ENCODE measurements at regions of chr22 and their contacts with region 1.

Region 1: DNA sequence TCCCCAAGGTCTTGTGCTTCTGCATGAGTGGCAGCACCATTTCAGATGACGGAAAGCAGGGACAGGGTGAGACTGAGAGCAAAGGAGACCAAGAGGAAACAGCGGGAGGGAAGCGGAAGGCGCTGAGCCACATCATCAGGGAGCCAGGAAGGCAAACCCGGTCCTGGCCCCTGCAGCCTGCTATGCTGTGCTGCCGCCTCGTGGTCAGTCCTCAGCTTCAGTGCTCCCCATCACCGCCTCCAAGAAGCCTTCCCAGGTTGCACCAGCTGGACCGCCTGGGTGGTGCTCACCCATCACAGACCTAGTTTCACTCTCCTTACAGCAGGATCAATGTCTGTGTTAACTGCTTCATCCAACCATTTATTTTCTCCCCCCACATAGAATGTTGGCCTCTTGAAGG is 73.0 kb upstream of the PHF21B start:
- DNase-seq: peak; percentile 45
- H3K4me3 Mint-ChIP-seq: no peak overlapping the region
- H3K27ac Mint-ChIP-seq: no peak overlapping the region
- H3K4me1 Mint-ChIP-seq: peaks cover 14% of the 10 kb centered on the region
- H3K27me3 Mint-ChIP-seq: peaks cover 37% of the 10 kb centered on the region

Region 2: DNA sequence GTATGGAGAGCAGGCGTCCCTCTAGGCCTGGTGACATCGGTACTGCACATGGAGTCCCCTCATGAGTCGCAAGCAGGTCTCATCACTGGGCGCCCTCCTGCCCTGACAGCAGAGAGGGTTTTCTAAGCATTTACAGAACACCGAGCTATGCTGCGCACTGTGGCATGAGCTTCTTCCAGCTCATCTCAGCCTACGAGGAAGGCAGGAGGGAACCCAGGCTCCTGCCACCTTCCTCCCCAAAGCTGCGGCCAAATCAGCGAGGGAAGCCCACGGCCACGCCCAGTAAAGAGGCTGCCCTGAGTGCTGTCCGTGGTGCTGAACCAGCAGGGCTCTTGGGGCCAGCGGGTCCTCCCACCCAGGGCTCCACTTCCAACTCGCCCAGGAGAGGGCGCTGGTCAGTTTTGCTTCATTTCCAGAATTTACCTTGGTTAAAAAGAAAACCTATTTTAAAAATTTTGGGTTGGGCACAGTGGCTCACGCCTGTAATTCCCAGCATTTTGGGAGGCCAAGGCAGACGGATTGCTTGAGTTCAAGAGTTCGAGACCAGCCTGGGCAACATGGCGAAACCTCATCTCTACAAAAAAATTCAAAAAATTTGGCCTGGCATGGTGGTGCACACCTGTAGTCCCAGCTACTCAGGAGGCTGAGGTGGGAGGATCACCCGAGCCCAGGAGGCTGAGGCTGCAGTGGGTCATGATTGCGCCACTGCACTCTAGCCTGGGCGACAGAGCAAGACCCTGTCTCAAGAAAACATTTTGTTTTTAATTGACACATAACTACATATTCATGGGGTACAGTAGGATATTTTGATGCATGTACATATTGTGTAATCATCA is 107.2 kb before region 1 on chr22:
- CTCF ChIA-PET with region 1: interaction called, 3 read pairs
- POLR2A ChIA-PET with region 1: no interaction called
- intact Hi-C with region 1: loop called (anchors 5 kb)
- DNase-seq: peak; percentile 87
- H3K4me3 Mint-ChIP-seq: no peak overlapping the region
- H3K27ac Mint-ChIP-seq: no peak overlapping the region
- H3K4me1 Mint-ChIP-seq: no peaks in the 10 kb centered on the region
- H3K27me3 Mint-ChIP-seq: peaks cover 12% of the 10 kb centered on the region

Region 3: GRCh38 chr22:45064313-45065278 is 18.2 kb before region 1 on chr22:
- CTCF ChIA-PET with region 1: interaction called, 3 read pairs
- POLR2A ChIA-PET with region 1: interaction called, 3 read pairs
- intact Hi-C with region 1: loop called (anchors 1 kb)
- DNase-seq: peak; percentile 85
- H3K4me3 Mint-ChIP-seq: no peak overlapping the region
- H3K27ac Mint-ChIP-seq: peak overlapping the region; percentile 24
- H3K4me1 Mint-ChIP-seq: peaks cover 16% of the 10 kb centered on the region
- H3K27me3 Mint-ChIP-seq: peaks cover 13% of the 10 kb centered on the region

Measured in activated CD4-positive, alpha-beta memory T cell treated with anti-CD3 and anti-CD28 coated beads for 36 hours (primary cell).